ENCODE measurements at regions of chr2 and their contacts with region 1.

Region 1: GRCh38 chr2:121530212-121530705 is 421 bp upstream of the RNU4ATAC start:
- DNase-seq: peak; percentile 88 to 90 (median 89)
- ATAC-seq: peak; percentile 89
- H3K4me3 ChIP-seq: peak overlapping the region; percentile 33
- H3K4me1 ChIP-seq: peaks cover 12% of the 10 kb centered on the region
- CTCF ChIP-seq: no peak

Region 2: DNA sequence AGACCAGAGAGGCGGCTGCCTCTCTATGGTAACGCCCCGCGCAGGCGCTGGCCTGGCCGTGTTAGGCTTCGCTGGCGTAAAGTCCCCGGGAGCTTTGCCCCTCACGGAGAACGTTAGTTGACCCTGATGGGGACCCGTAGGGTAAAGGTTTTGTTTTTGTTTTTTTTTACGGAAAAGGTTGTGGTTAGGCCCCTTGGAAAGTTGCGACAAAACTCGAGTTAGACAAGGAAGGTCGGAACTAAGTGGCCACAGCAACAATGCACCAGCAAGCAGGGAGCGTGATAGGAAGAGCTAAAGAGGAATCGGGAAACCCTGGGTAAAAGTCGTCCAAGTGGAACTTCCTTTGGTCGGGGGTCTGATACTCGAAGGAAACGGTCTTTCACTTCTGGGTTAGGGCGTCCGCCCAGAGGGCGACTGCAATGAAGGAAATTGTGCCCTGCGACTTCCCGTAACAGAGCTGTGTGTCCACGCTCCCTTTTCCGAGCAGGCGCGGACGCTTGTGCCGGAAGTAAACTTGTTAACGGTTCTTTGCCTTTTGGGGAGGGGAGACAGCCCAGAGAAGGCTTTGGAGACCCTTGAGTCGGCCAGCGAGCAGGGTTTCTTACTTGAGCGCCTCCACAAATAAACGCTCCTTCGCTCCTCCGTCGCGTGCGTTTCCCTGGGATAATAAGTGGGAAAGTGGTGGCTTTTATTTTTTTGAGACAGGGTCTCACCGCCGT is 119.5 kb after region 1 on chr2:
- intact Hi-C with region 1: loop called in 1 of 2 experiments (anchors 10 kb)
- DNase-seq: peak; percentile 96 to 98 (median 96)
- ATAC-seq: peak; percentile 98
- H3K4me3 ChIP-seq: peak overlapping the region; percentile 95
- H3K4me1 ChIP-seq: peaks cover 22% of the 10 kb centered on the region
- CTCF ChIP-seq: no peak

Region 3: GRCh38 chr2:121722479-121722878 is 192.2 kb after region 1 on chr2:
- intact Hi-C with region 1: loop called in 1 of 2 experiments (anchors 10 kb)
- DNase-seq: no peak
- ATAC-seq: no peak
- H3K4me3 ChIP-seq: no peak overlapping the region
- H3K4me1 ChIP-seq: no peaks in the 10 kb centered on the region
- CTCF ChIP-seq: no peak

Measured in mucosa of descending colon (tissue), 3 donors.